HEK293 (cell line): ENCODE measurements at regions of chr17 and their contacts with region 1.

Region 1: DNA sequence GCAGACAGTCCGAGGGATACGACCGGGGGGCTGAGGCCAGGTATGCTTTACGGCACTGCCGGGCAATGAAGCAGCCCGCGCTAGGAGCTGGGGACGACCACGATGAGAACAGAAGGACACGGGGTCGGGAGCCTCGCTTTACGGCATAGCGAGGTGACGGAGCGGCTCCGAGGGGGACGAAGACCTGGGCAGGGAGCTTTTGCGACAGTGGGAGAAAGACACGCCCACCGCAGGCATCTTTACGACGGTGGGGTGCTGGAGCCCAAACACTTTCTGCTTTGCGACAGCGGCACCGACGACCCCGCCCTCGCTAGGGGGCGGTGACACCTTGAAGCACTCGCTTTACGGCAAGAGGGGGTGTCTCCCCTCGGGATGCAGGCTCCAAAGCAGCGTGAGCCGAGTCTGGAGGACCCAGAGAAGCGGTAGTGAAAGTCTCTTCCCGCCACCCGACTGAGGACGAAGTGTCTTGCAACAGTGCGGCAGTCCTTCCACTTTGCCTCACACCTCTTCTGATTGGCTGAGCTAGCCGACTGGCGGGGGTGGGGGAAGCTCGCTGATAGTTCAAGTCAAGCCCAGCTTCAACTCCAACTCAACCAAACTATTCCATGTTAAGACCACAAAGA is 350 bp upstream of the NEURL4 start:
- H3K4me3 ChIP-seq: peak overlapping the region; percentile 64
- H3K27ac ChIP-seq: peak overlapping the region; percentile 86
- H3K4me1 ChIP-seq: peaks cover 9% of the 10 kb centered on the region
- CTCF ChIP-seq: no peak

Region 2: DNA sequence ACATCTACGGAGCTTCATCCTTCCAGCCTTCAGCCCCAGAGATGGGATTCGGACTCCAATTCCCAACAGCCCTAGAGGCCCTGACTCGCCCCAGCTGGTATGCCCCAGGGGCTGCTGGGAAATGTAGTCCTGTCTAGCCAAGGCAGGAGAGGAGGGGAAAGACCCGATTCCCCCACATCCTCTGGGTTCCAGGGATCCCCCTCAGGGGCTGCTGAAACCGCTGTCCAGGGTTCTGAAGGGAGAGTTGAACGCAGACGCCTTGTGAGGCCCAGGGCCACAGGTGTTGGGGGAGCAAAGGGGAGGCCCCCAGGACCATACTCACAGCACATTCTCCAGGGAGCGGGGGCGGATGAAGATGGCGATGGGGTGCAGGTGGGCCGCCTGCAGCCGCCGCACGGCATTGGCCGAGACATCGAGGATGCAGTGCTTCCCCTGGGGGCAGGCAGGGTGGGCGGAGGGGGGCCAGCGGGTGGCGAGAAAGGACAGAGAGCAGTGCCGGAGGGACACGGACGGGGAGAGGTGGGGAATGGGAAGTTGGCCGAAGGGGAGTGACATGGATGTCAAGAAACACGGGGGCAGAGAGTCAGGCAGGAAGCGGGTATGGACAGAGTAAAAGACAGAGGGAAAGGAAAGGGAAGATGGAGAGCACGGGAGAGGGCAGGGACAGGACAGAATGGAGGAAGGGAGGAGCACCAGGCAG is 137.8 kb before region 1 on chr17:
- CTCF ChIA-PET with region 1: no interaction called
- POLR2A ChIA-PET with region 1: no interaction called
- H3K4me3 ChIP-seq: no peak overlapping the region
- H3K27ac ChIP-seq: no peak overlapping the region
- H3K4me1 ChIP-seq: no peaks in the 10 kb centered on the region
- CTCF ChIP-seq: no peak

Region 3: DNA sequence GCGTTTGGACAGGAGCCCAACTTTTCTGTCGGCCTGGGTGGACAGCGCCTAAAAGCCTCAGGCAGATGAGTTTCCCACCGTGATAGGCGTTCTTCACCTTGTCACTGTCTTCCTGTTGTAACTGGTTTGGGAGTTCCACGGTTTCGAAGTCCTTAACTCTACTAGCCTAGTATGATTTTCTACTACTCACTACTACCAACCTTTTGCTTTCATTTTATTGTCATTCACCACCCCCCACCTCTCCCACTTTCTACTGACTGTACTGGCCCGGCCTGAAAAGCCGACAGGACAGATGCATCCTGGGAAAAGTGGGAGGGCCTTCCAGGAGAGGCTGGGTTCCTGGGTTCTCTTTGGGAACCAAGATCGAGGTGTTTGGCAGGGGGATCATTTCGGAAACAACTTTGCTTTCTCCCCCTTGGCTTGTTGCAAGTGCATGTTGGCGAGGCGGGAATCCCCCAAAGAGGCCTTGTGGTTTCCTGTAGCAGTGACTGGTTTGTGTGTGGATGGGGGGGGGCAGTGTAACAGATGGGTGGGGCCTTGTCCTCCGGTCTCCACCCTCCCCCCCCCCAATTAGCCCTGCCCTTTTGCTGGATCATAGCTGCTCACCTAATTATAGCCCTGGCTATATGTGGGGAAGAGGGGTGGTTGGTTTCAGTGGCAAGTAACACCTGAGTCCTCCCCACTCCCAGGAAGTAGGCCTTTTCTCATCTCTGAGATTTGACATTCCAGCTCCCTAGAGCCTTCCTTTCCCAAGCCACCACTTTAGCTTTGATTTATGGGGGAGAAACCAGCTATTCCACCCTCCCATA is 20.7 kb before region 1 on chr17:
- CTCF ChIA-PET with region 1: interaction called, 7 read pairs
- POLR2A ChIA-PET with region 1: interaction called, 42 read pairs
- H3K4me3 ChIP-seq: peak overlapping the region; percentile 80
- H3K27ac ChIP-seq: peak overlapping the region; percentile 99
- H3K4me1 ChIP-seq: peaks cover 19% of the 10 kb centered on the region
- CTCF ChIP-seq: no peak

Region 4: GRCh38 chr17:7344399-7344798 is 14.9 kb after region 1 on chr17:
- CTCF ChIA-PET with region 1: interaction called, 50 read pairs
- POLR2A ChIA-PET with region 1: interaction called, 35 read pairs
- H3K4me3 ChIP-seq: no peak overlapping the region
- H3K27ac ChIP-seq: no peak overlapping the region
- H3K4me1 ChIP-seq: no peaks in the 10 kb centered on the region
- CTCF ChIP-seq: no peak

Region 5: DNA sequence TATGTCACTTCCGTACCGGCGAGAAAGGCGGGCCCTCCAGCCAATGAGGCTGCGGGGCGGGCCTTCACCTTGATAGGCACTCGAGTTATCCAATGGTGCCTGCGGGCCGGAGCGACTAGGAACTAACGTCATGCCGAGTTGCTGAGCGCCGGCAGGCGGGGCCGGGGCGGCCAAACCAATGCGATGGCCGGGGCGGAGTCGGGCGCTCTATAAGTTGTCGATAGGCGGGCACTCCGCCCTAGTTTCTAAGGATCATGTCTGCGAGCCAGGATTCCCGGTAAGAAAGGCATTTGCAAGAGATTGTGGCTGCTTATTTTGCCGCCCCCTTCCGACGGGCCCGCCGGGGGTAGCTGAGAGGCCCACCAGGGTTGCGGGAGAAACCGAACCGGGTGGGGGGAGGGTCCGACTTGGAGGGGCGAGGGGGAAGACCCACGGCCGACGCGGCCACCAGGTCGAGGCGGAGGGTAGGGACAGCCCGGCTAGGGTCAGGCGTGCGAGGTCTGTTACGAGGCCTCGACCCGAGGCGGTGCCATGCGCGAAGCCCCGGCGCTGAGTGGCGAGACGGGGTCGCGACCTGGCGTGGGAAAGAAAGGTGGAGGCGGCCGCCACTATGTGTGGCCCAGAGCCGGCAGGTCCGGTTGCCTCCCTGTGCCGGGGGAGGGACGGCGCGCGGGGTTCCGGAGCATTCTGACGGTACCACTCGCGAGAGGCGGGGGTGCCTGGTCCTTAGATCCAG is 243.3 kb after region 1 on chr17:
- CTCF ChIA-PET with region 1: no interaction called
- POLR2A ChIA-PET with region 1: interaction called, 14 read pairs
- H3K4me3 ChIP-seq: peak overlapping the region; percentile 97
- H3K27ac ChIP-seq: peak overlapping the region; percentile 98
- H3K4me1 ChIP-seq: peaks cover 5% of the 10 kb centered on the region
- CTCF ChIP-seq: 0 out of 2 replicates have a peak, but pooled peaks have one; percentile 38